ENCODE measurements at regions of chr6 and their contacts with region 1.

Region 1: GRCh38 chr6:167141667-167142432 is 15.9 kb downstream of the GPR31 start:
- DNase-seq: peak; percentile 71
- H3K4me3 Mint-ChIP-seq: no peak overlapping the region
- H3K27ac Mint-ChIP-seq: no peak overlapping the region
- H3K4me1 Mint-ChIP-seq: peaks cover 37% of the 10 kb centered on the region
- H3K27me3 Mint-ChIP-seq: no peaks in the 10 kb centered on the region

Region 2: DNA sequence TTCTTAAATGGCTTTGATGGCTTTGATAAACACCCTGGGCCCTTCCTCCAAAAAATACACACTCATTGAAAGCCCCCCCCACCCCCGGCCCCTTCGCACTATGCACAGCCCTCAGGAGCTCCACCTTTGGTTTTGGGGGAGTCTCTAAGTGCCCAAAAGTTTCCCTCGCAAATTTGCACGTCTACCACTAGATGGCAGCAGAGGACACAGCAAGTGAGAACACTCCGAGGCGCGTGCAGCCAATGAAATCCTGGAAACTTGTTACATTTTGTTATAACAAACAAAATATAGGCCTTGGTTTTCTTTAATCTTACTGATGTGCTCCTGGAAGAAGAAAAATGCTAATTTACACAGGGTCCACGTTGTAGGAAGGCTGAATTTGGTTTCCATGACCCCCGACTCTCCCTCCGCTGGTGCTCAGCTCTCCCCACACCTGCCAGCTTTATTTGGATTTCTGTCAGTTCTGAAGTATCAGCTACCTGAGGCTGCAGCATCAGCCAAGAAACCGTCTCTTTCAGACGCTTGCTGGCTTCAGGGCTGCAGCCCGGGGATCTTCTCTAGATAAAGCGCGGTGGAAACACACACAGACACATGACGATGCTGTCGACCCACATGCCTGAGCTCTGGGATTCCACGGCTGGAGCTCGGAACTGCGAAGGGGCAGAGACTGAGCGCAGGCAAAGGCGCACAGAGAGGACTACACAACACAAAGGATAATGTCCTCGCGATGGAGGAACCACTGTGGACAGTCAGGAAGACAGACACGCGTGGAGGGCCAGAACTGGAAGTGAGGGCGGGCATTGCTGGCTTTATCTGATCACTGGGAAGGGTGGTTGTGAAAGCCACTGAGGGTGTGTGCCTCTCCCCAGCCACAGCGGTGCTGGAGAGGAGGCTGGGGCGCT is 366.4 kb before region 1 on chr6:
- CTCF ChIA-PET with region 1: interaction called, 55 read pairs
- POLR2A ChIA-PET with region 1: no interaction called
- intact Hi-C with region 1: loop called (anchors 1 kb)
- DNase-seq: peak; percentile 69
- H3K4me3 Mint-ChIP-seq: no peak overlapping the region
- H3K27ac Mint-ChIP-seq: no peak overlapping the region
- H3K4me1 Mint-ChIP-seq: no peaks in the 10 kb centered on the region
- H3K27me3 Mint-ChIP-seq: no peaks in the 10 kb centered on the region

Region 3: DNA sequence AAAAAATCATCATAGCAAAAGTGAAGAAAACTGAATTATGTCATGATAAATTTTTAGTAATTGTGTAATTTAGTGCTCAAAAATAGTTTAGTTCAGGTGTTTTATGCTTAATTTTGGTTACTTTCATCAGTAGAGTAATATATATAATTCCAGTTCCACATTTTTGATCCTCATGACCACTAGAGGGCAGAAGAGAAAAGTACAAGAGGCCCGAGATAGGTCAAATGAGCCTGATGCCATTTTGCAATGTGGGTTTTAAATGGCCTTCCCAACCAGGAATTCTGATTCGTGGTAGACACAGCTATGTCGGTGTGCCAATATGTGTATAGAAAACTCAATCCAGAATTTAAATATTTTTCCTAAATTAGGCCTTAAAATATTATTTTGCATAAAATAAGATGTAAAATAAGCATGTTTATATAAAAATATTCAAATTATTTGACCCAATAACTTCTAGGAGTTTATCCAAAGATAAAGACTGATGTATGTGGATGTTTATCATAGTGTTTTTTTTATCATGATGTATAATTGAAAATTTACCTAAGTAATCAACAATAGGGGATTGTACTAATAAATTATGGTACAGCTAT is 355.1 kb before region 1 on chr6:
- CTCF ChIA-PET with region 1: interaction called, 17 read pairs
- POLR2A ChIA-PET with region 1: no interaction called
- intact Hi-C with region 1: loop called (anchors 1 kb)
- DNase-seq: no peak
- H3K4me3 Mint-ChIP-seq: no peak overlapping the region
- H3K27ac Mint-ChIP-seq: no peak overlapping the region
- H3K4me1 Mint-ChIP-seq: no peaks in the 10 kb centered on the region
- H3K27me3 Mint-ChIP-seq: peaks cover 1% of the 10 kb centered on the region

Region 4: GRCh38 chr6:166989427-166990032 is 152.3 kb before region 1 on chr6:
- CTCF ChIA-PET with region 1: interaction called, 20 read pairs
- POLR2A ChIA-PET with region 1: no interaction called
- intact Hi-C with region 1: no loop called
- DNase-seq: peak; percentile 53
- H3K4me3 Mint-ChIP-seq: no peak overlapping the region
- H3K27ac Mint-ChIP-seq: no peak overlapping the region
- H3K4me1 Mint-ChIP-seq: peaks cover 24% of the 10 kb centered on the region
- H3K27me3 Mint-ChIP-seq: no peaks in the 10 kb centered on the region

Region 5: GRCh38 chr6:166999145-166999883 is 142.5 kb before region 1 on chr6 and contains the start of gene CEP43:
- CTCF ChIA-PET with region 1: interaction called, 34 read pairs
- POLR2A ChIA-PET with region 1: no interaction called
- intact Hi-C with region 1: loop called (anchors 2 kb)
- DNase-seq: peak; percentile 90
- H3K4me3 Mint-ChIP-seq: peak within 1 kb of the TSS; percentile 85
- H3K27ac Mint-ChIP-seq: peak within 1 kb of the TSS; percentile 85
- H3K4me1 Mint-ChIP-seq: peaks cover 28% of the 10 kb centered on the region
- H3K27me3 Mint-ChIP-seq: no peaks in the 10 kb centered on the region
- total RNA-seq, gene CEP43: 19.5 to 21.3 TPM

Region 6: GRCh38 chr6:167119670-167120381 is 22.0 kb before region 1 on chr6:
- CTCF ChIA-PET with region 1: interaction called, 6 read pairs
- POLR2A ChIA-PET with region 1: no interaction called
- intact Hi-C with region 1: loop called (anchors 2 kb)
- DNase-seq: peak; percentile 55
- H3K4me3 Mint-ChIP-seq: no peak overlapping the region
- H3K27ac Mint-ChIP-seq: peak overlapping the region; percentile 72
- H3K4me1 Mint-ChIP-seq: peaks cover 87% of the 10 kb centered on the region
- H3K27me3 Mint-ChIP-seq: no peaks in the 10 kb centered on the region

Region 7: GRCh38 chr6:167329014-167329413 is 187.2 kb after region 1 on chr6:
- CTCF ChIA-PET with region 1: no interaction called
- POLR2A ChIA-PET with region 1: no interaction called
- intact Hi-C with region 1: no loop called
- DNase-seq: peak; percentile 67
- H3K4me3 Mint-ChIP-seq: no peak overlapping the region
- H3K27ac Mint-ChIP-seq: no peak overlapping the region
- H3K4me1 Mint-ChIP-seq: peaks cover 19% of the 10 kb centered on the region
- H3K27me3 Mint-ChIP-seq: peaks cover 27% of the 10 kb centered on the region

Region 8: DNA sequence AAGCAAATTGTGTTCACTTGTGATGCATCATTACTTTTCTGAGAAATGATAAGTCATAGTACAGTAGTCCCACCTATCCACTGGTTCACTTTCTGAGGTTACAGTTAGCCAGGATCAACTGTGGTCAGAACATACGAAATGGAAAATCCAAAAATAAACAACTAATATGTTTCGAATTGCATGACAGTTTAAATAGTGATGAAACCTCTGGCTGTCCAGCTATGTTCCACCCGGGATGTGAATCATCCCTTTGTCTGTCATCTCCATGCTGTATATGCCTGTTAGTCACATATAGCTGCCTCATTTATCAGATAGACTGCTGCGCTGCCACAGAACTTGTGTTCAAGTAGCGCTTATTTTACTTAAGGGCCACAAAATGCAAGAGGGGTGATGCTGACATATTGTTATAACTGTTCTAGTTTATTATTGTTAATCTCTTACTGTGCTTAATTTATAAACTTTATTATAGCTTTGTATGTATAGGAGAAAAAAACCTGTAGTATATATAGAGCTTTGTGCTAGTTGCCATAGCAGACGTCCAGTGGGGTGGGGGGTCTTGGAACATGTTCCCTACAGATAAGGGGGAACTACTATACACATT is 714.1 kb after region 1 on chr6:
- CTCF ChIA-PET with region 1: no interaction called
- POLR2A ChIA-PET with region 1: no interaction called
- intact Hi-C with region 1: no loop called
- DNase-seq: peak; percentile 26
- H3K4me3 Mint-ChIP-seq: no peak overlapping the region
- H3K27ac Mint-ChIP-seq: peak overlapping the region; percentile 58
- H3K4me1 Mint-ChIP-seq: peaks cover 25% of the 10 kb centered on the region
- H3K27me3 Mint-ChIP-seq: peaks cover 2% of the 10 kb centered on the region